IMR-90 (cell line): ENCODE measurements at regions of chr2 and their contacts with region 1.

Region 1: GRCh38 chr2:227671170-227672060 is 4.8 kb downstream of the SCYGR5 start:
- DNase-seq: no peak
- ATAC-seq: no peak
- H3K4me3 ChIP-seq: no peak overlapping the region
- H3K27ac ChIP-seq: no peak overlapping the region
- H3K4me1 ChIP-seq: no peaks in the 10 kb centered on the region
- H3K27me3 ChIP-seq: no peaks in the 10 kb centered on the region
- CTCF ChIP-seq: no peak
- POLR2A ChIP-seq: no peak
- RAD21 ChIP-seq: no peak

Region 2: DNA sequence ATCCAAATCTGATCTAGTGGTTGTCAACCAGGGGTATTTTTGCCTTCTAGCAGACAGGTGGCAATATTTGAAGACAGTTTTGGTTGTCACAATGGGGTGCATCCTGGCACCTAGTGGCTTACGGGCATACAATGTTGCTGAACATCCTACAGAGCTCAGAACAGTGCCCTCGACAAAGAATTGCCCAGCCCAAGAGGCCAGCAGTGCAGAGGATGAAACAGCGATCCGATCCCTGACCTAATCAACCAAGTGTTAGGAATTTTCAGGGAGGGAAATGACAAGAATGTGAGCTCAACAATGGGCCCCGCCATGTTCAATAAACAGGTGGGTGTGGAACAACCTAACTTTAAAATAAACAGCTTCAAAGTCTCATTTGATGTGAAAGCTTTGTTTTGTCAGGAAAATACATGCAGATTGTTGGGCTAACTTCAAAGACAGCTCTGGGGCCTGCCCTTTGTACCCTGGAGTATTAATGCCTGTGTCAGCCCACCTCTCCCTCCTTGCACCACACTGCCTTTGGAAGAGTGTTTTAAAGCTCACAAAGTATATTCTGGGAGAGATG is 27.3 kb before region 1 on chr2:
- CTCF ChIA-PET with region 1: no interaction called
- POLR2A ChIA-PET with region 1: interaction called, 14 read pairs
- dilution Hi-C with region 1: no loop called
- in situ Hi-C with region 1: no loop called
- intact Hi-C with region 1: no loop called
- DNase-seq: no peak
- ATAC-seq: no peak
- H3K4me3 ChIP-seq: no peak overlapping the region
- H3K27ac ChIP-seq: no peak overlapping the region
- H3K4me1 ChIP-seq: no peaks in the 10 kb centered on the region
- H3K27me3 ChIP-seq: no peaks in the 10 kb centered on the region
- CTCF ChIP-seq: no peak
- POLR2A ChIP-seq: no peak
- RAD21 ChIP-seq: no peak

Region 3: DNA sequence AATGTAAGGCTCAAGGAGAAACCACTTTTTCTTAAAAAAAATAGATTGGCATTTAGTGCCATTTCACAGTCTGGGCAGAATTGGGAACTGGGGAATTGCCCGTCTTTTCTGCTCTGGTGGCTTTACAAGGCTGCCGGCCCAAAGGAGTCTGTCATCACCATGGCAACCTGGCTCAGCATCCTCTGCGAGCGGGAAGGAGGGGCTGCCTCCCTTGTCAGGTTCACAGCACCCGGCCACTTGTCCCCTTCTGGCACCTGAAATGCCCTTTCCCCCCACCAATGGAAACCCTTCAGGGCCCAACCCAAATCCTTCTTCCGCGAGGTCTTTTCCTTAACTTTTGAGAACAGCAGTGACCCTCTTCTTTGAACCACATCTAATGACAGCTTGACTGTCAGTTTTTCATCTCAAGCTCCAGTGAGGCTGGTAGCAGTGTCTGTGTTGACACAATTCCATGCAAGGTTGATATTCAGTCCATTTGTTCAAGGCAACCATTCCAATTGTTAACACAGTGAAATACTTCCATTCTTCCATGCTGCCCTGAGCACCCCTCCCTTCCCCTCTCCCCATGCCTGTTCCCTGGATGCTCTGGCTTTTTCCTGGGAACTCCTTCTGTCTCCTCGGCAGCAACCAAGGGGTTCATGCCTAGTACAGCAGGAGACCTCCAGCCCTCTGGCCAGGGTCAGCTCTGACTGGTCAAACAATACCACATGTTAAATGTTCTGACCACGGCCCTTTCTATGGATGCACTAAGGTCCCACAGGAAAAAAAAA is 1963.4 kb after region 1 on chr2:
- CTCF ChIA-PET with region 1: no interaction called
- POLR2A ChIA-PET with region 1: no interaction called
- dilution Hi-C with region 1: no loop called
- in situ Hi-C with region 1: no loop called
- intact Hi-C with region 1: no loop called
- DNase-seq: no peak
- ATAC-seq: no peak
- H3K4me3 ChIP-seq: no peak overlapping the region
- H3K27ac ChIP-seq: no peak overlapping the region
- H3K4me1 ChIP-seq: no peaks in the 10 kb centered on the region
- H3K27me3 ChIP-seq: no peaks in the 10 kb centered on the region
- CTCF ChIP-seq: no peak
- POLR2A ChIP-seq: no peak
- RAD21 ChIP-seq: no peak